ENCODE measurements at regions of chr16 and their contacts with region 1.

Region 1: DNA sequence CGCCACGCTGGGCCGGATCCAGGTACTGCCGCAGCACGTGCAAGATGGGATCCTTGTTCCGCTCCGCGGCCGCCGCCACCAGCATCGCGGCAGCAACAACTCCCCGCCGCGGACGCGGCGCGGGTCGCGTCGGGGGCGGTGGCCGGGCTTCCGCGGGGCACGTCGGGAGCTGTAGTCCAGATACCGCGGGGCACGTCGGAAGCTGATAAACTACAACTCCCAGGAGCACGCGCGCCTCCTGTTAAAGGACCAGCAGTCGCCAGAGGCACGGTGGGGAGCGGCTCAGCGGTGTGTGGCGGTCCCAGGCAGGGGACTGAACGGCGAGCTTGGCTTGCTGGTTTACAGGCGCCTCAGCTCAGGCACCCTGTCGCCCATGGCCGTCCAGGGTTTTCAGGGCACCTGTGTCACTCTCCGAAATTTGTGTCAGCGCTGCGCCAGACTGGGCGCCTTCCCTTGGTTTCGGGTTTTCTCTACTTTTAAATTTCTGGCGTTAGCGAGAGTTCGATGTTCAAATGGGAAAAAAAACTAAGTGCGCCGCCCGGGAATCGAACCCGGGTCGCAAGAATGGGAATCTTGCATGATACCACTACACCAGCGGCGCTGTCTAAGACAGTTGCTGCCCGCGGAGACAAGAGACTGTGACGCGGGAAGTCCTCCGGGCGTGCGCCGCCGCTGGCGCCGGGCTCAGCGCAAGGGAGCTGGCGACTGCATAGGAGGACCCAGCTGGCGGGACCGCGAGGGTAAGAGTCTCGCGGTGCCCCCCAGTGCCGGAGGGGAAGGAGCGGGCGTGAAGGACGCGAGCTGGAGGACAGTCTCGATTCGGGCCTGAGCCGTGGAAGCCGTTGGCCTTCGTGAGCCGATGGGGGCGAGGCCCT is at the start of gene METTL26:
- DNase-seq: peak; percentile 97
- ATAC-seq: peak; percentile 89
- H3K4me3 Mint-ChIP-seq: peak within 1 kb of the TSS; percentile 87
- H3K27ac Mint-ChIP-seq: peak within 1 kb of the TSS; percentile 91
- H3K4me1 Mint-ChIP-seq: peaks cover 13% of the 10 kb centered on the region
- H3K27me3 Mint-ChIP-seq: no peaks in the 10 kb centered on the region
- total RNA-seq, gene METTL26: 116 to 127 TPM

Region 2: GRCh38 chr16:234468-235305 is 401.8 kb before region 1 on chr16 and contains the start of gene FAM234A:
- CTCF ChIA-PET with region 1: no interaction called
- POLR2A ChIA-PET with region 1: no interaction called
- intact Hi-C with region 1: loop called in 1 of 2 experiments (anchors 1 kb)
- DNase-seq: peak; percentile 98
- ATAC-seq: peak; percentile 91
- H3K4me3 Mint-ChIP-seq: peak within 1 kb of the TSS; percentile 90
- H3K27ac Mint-ChIP-seq: peak within 1 kb of the TSS; percentile 96
- H3K4me1 Mint-ChIP-seq: peaks cover 17% of the 10 kb centered on the region
- H3K27me3 Mint-ChIP-seq: no peaks in the 10 kb centered on the region
- total RNA-seq, gene FAM234A: 11.3 to 15.2 TPM

Region 3: DNA sequence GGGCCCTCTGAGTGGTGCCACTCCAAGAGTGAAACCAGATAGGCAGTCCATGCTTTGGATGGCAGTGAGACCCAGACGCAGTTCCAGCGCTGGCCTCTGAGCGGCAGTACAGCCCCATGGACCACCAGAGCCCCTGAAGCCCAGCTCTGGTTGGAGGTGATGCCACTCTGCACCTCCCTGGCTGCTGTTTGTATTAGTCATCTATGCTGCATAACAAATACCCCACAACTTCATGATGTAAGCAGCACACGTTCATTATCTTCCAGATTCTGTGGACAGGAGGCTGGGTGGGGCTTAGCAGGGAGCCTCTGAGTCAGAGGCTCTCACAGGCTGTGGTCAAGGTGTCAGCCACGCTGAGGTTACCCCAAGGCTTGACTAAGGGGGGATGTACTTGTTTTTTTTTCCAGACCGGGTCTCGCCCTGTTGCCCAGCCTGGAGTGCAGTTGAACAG is 244.5 kb before region 1 on chr16:
- CTCF ChIA-PET with region 1: no interaction called
- POLR2A ChIA-PET with region 1: no interaction called
- intact Hi-C with region 1: loop called in 1 of 2 experiments (anchors 2 kb)
- DNase-seq: peak; percentile 91
- ATAC-seq: peak; percentile 93
- H3K4me3 Mint-ChIP-seq: no peak overlapping the region
- H3K27ac Mint-ChIP-seq: no peak overlapping the region
- H3K4me1 Mint-ChIP-seq: peaks cover 22% of the 10 kb centered on the region
- H3K27me3 Mint-ChIP-seq: peaks cover 3% of the 10 kb centered on the region

Region 4: DNA sequence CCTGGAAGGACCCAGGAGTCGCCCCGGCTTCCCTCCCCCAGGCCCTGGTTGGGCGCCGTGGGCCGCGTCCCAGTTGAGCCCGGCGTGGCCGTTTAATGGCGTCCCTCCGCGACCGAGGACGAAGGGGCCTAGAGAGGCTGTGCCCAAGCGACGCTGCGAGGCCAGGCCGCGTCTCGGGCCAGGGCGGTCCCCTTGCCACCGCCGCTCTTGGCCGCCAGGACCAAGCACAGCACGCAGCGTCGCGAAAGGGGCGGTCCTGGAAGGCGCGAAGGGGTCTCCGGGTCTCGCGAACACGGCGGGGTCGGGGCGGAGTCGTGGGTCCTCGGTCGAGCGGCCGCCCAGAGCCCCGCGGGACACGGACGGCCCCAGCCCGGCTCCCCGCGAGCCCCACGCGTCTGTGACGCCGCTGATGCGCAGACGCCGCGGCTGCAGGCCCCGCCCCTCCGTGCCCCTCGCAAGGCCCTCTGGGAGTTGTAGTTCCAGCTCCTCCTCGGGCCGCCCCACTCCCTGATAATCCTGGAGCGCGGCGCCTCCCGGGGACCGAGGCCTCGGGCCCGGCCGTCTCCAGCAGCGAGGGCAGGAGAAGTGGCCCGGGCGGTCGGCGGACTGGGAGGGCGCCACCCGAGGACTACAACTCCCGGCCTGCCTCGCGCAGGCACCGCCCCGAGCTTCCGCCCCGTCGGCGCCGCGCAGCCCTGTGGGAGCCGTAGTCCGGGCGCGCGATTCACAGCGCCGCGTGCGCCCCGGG is 109.3 kb before region 1 on chr16 and contains the start of gene CAPN15:
- CTCF ChIA-PET with region 1: interaction called, 4 read pairs
- POLR2A ChIA-PET with region 1: no interaction called
- intact Hi-C with region 1: loop called (anchors 1 to 5 kb)
- DNase-seq: peak; percentile 91
- ATAC-seq: peak; percentile 71
- H3K4me3 Mint-ChIP-seq: peak within 1 kb of the TSS; percentile 94
- H3K27ac Mint-ChIP-seq: peak within 1 kb of the TSS; percentile 96
- H3K4me1 Mint-ChIP-seq: peaks cover 35% of the 10 kb centered on the region
- H3K27me3 Mint-ChIP-seq: no peaks in the 10 kb centered on the region
- total RNA-seq, gene CAPN15: 64.7 to 69.7 TPM

Region 5: DNA sequence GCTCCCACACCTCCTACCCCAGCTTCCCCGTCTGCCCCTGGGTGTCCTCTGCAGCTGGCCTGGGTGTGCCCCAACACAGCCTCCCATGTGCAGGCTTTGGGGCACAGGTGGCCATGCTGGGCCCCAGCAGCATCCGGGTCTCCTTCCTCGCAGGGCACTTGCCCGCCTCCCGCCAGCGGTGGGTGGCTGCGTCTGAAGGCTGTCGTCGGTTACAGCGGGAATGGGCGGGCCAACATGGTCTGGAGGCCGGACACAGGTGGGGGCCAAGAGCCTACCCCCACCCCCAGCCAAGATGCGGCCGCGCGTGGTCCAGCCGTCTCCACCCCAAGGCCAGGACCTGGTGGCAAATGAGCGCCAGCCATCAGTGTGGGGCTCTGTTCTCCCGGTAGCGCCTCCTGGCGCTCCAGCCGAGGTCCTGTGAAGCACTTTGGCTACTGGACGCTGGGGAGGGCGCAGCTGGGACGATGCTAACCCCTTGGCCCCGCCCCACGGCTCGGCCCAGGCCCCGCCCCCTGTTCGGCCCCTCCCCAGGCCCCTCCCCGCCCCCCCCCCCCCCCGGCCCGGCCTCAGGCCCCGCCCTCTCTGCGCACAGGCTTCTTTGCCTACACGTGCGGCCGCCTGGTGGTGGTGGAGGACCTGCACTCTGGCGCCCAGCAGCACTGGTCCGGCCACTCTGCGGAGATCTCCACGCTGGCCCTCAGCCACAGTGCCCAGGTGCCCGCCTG is 24.2 kb after region 1 on chr16:
- CTCF ChIA-PET with region 1: no interaction called
- POLR2A ChIA-PET with region 1: no interaction called
- intact Hi-C with region 1: loop called in 1 of 2 experiments (anchors 1 kb)
- DNase-seq: peak; percentile 87
- ATAC-seq: peak; percentile 85
- H3K4me3 Mint-ChIP-seq: peak overlapping the region; percentile 35
- H3K27ac Mint-ChIP-seq: peak overlapping the region; percentile 60
- H3K4me1 Mint-ChIP-seq: peaks cover 5% of the 10 kb centered on the region
- H3K27me3 Mint-ChIP-seq: no peaks in the 10 kb centered on the region

Region 6: DNA sequence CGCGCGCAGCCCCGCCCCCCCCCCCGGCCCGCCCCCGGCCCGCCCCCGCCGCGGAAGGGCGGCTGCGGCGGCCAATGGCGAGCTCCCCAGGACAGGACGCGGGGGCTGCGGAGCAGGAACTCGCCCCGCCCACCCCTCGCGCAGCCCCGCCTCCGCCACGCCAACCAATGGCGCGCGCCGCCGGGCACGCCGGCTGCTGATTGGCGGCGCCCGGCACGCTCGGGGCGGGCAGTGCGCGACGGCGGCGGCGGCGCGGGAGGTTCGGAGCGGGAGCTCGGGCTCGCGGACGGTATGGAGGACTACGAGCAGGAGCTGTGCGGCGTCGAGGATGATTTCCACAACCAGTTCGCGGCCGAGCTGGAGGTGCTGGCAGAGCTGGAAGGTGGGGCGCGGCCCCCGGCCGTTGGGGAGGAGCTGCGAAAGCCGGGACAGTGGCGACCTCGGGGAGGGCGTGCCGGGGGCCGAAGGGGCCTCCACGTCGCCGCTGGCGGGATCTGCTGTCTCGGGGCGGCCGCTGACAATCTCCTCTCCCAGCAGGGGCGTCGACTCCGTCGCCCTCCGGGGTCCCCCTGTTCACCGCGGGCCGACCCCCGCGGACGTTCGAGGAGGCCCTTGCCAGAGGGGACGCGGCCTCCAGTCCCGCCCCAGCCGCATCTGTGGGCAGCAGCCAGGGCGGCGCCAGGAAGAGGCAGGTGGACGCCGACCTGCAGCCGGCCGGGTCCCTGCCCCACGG is 152.1 kb after region 1 on chr16 and contains the start of gene CHTF18:
- CTCF ChIA-PET with region 1: no interaction called
- POLR2A ChIA-PET with region 1: no interaction called
- intact Hi-C with region 1: loop called in 1 of 2 experiments (anchors 1 kb)
- DNase-seq: peak; percentile 97
- ATAC-seq: peak; percentile 98
- H3K4me3 Mint-ChIP-seq: peak within 1 kb of the TSS; percentile 88
- H3K27ac Mint-ChIP-seq: peak within 1 kb of the TSS; percentile 78
- H3K4me1 Mint-ChIP-seq: peaks cover 13% of the 10 kb centered on the region
- H3K27me3 Mint-ChIP-seq: no peaks in the 10 kb centered on the region
- total RNA-seq, gene CHTF18: 82.2 to 105 TPM

Region 7: GRCh38 chr16:1420111-1420540 is 783.7 kb after region 1 on chr16:
- CTCF ChIA-PET with region 1: no interaction called
- POLR2A ChIA-PET with region 1: no interaction called
- intact Hi-C with region 1: loop called in 1 of 2 experiments (anchors 2 kb)
- DNase-seq: peak; percentile 32
- ATAC-seq: no peak
- H3K4me3 Mint-ChIP-seq: peak overlapping the region; percentile 84
- H3K27ac Mint-ChIP-seq: peak overlapping the region; percentile 70
- H3K4me1 Mint-ChIP-seq: peaks cover 25% of the 10 kb centered on the region
- H3K27me3 Mint-ChIP-seq: no peaks in the 10 kb centered on the region